OCI-LY7 (cell line): ENCODE measurements at regions of chr16 and their contacts with region 1.

Region 1: DNA sequence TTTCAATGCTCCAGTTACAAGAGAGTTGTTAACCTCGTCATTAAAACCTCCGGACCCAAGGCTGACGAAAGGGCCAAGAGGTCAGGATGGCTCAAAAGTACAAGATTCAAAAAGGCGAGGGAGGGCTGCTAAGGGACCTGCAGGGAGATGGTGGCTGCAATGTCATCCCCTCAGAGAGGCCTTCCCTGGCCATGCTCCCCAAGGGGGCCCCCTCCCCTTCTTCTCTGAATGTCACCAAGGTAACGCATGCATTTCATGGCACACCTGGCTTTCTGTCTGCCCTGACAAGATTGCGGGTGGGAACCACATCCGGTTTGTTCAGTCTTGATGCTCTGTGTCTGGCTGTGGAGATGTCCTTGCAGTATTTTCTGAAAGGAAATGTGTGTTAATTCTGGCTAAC is 89.9 kb downstream of the C16orf78 start:
- DNase-seq: peak; percentile 94
- H3K4me3 ChIP-seq: peak overlapping the region; percentile 42
- H3K27ac ChIP-seq: peak overlapping the region; percentile 78
- H3K4me1 ChIP-seq: peaks cover 60% of the 10 kb centered on the region
- CTCF ChIP-seq: peak; percentile 9; the same call in 1 of the 2 replicates

Region 2: GRCh38 chr16:49399594-49400364 is 63.8 kb before region 1 on chr16:
- CTCF ChIA-PET with region 1: no interaction called
- POLR2A ChIA-PET with region 1: no interaction called
- intact Hi-C with region 1: loop called (anchors 2 kb)
- DNase-seq: peak; percentile 91
- H3K4me3 ChIP-seq: peak overlapping the region; percentile 45
- H3K27ac ChIP-seq: peak overlapping the region; percentile 80
- H3K4me1 ChIP-seq: peaks cover 34% of the 10 kb centered on the region
- CTCF ChIP-seq: no peak

Region 3: DNA sequence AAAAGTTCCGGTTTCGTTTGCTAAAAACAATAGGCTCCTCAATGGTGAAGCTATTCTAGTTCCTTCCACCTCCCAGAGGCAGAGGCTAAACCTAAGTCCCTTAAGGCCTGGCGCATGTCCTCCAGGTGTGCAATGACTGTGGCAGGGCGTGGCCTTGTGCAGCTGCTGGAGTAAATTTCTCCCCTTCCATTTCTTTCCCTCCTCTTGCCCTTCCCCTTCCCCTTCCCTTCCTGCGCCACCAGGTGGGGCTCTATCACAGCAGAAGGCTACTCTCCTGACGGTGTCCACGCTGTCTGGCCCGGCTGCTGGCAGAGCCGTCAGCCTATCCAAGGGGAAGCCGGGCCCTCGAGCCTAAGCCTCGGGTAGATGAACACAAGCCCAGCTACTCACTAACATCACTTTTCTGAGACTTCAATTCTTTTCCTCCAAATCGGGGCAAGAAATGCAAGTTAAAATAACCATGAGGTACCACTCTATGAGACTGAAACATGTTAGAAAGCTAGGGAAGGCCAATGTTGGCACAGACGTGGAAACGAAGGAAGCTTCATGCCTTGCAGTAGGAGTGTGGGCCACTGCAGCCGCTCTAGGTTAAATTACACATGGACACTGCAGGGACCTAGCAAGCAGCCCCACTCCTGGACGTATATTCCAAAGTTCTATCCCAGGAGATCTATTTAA is 55.5 kb before region 1 on chr16:
- CTCF ChIA-PET with region 1: no interaction called
- POLR2A ChIA-PET with region 1: no interaction called
- intact Hi-C with region 1: loop called (anchors 2 kb)
- DNase-seq: peak; percentile 90
- H3K4me3 ChIP-seq: no peak overlapping the region
- H3K27ac ChIP-seq: no peak overlapping the region
- H3K4me1 ChIP-seq: peaks cover 26% of the 10 kb centered on the region
- CTCF ChIP-seq: peak; percentile 95

Region 4: DNA sequence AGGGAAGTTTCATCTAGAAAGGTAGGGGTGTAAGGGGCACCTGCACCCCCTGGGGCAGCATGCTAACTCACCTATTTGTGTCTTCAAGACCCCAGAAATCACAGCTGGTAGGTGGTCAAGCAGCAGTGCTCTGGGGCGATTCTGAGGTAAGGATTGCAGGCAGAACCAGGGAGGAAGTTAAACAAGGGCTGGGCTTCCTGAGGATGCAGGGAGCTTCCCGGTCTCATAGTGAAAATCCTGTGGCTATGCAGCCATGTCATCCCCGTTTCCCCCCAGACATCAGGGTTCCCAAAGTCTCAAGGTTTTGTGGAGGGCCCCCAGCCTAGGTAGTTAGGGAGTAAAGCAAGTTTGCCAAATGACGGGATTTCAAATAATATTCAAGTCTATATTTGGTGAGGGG is 11.4 kb before region 1 on chr16:
- CTCF ChIA-PET with region 1: interaction called, 4 read pairs
- POLR2A ChIA-PET with region 1: interaction called, 24 read pairs
- intact Hi-C with region 1: no loop called
- DNase-seq: no peak
- H3K4me3 ChIP-seq: no peak overlapping the region
- H3K27ac ChIP-seq: no peak overlapping the region
- H3K4me1 ChIP-seq: peaks cover 3% of the 10 kb centered on the region
- CTCF ChIP-seq: no peak